ENCODE measurements at regions of chr22 and their contacts with region 1.

Region 1: GRCh38 chr22:44722131-44722530 is 20.1 kb downstream of the PRR5 start:
- DNase-seq: no peak
- H3K4me3 ChIP-seq: no peak overlapping the region
- H3K27ac ChIP-seq: no peak overlapping the region
- H3K4me1 ChIP-seq: no peaks in the 10 kb centered on the region
- H3K27me3 ChIP-seq: no peaks in the 10 kb centered on the region
- CTCF ChIP-seq: no peak

Region 2: DNA sequence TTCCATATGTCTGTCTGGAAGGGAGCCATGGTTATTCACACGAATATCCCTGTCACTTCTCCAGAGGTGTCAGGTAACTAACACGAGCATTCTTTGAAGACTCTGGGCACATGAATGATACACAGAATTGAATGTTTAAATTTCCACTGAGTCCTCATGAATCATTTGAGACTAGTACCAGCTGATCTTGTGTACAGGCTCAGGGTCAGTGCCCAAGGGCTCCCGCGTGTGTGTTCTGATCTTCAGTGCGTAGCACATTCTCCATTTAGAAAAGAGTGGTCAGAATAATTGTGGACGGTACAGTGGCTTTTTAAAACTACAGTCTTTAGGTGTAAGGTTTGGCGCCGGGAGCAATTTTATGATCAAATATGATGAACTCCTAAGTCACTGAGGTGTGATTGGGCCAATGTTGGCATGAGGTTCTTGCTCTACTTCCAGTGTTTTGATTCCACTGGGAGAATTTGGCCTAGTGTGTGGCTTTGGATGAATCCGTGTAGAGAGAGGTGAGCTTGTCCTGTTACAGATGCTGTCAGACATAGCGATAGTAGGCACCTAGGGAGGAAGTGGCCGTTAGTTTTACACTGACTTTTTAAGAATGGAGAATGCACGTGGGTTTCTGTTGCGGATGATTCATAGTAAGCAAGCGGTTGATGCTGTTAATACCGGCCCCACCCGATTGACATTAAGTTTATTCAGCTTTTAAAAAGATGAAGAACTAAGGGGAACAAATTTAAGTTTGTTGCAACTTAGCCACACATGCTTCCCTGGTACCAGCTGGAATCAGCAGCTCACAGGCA is 463.8 kb after region 1 on chr22:
- CTCF ChIA-PET with region 1: no interaction called
- POLR2A ChIA-PET with region 1: interaction called, 24 read pairs
- intact Hi-C with region 1: no loop called
- DNase-seq: peak in 1 of 2 experiments; percentile 29
- H3K4me3 ChIP-seq: no peak overlapping the region
- H3K27ac ChIP-seq: no peak overlapping the region
- H3K4me1 ChIP-seq: no peaks in the 10 kb centered on the region
- H3K27me3 ChIP-seq: no peaks in the 10 kb centered on the region
- CTCF ChIP-seq: no peak

Measured in PC-9 (cell line).